Activated CD8-positive, alpha-beta memory T cell treated with anti-CD3 and anti-CD28 coated beads, Interleukin-2, amount 10 ng/mL, durations not matched to agents 7 days and 5 days (primary cell): ENCODE measurements at regions of chr22 and their contacts with region 1.

Region 1: DNA sequence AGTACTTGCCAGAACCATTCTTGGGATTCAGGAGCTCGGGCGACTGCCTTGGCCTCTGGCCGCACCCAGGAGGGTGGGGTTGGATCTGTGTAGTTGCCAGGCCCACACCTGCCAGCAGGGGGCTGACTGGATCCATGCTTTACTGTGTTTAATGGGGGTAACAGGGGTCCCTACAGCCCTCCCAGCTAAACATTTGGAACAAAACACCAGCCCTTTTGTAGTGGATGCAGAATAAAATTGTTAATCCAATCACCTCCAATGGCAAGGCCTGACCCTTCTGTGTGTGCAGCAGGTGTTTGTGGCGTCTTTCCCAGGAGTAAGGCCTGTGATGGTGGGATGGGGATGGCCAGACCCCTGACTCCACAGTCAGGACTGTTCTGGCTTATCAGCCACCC is 22.5 kb downstream of the SUN2 start:
- DNase-seq: peak; percentile 70
- ATAC-seq: peak; percentile 64
- H3K4me3 Mint-ChIP-seq: no peak overlapping the region
- H3K27ac Mint-ChIP-seq: peak overlapping the region; percentile 65
- H3K4me1 Mint-ChIP-seq: peaks cover 28% of the 10 kb centered on the region
- H3K27me3 Mint-ChIP-seq: no peaks in the 10 kb centered on the region

Region 2: GRCh38 chr22:38745676-38746460 is 12.5 kb after region 1 on chr22:
- CTCF ChIA-PET with region 1: interaction called, 28 read pairs
- DNase-seq: no peak
- ATAC-seq: no peak
- H3K4me3 Mint-ChIP-seq: no peak overlapping the region
- H3K27ac Mint-ChIP-seq: peak overlapping the region; percentile 8
- H3K4me1 Mint-ChIP-seq: peaks cover 40% of the 10 kb centered on the region
- H3K27me3 Mint-ChIP-seq: no peaks in the 10 kb centered on the region

Region 3: DNA sequence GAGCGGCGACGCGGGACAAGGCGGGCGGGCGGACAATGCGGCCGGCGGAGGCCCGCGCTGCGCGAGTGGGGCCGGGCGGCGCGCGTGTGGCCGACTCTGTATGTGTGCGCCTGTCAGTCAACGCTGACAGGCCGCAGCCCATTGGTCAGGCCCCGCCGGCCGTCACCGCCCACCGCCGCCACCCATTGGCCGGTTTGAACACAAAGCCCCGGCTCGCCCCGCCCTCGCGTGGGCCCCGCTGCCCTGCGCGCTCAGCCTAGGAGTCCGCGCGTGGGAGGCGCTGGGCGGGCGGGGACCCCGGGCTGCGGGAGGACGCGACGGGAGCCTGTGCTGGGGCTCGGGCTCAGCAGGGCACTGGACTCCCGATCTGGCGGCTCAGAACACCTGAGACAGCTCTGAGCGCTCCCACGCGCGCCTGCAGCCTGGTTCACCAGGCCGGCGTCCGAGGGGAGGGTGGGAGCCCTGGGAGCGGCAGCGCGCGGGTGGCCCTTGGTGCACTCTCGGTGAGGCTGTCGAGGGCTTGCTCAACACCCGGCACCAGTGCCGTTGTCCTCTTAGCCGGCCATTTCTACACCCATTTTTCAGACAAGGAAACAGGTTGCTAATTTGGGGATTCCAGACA is 22.7 kb after region 1 on chr22 and contains the start of gene SUN2:
- CTCF ChIA-PET with region 1: interaction called, 23 read pairs
- DNase-seq: peak; percentile 96
- ATAC-seq: peak; percentile 79
- H3K4me3 Mint-ChIP-seq: peak within 1 kb of the TSS; percentile 92
- H3K27ac Mint-ChIP-seq: peak within 1 kb of the TSS; percentile 99
- H3K4me1 Mint-ChIP-seq: peaks cover 45% of the 10 kb centered on the region
- H3K27me3 Mint-ChIP-seq: no peaks in the 10 kb centered on the region
- total RNA-seq, gene SUN2: 320 to 412 TPM